Tibial artery (tissue), 4 donors: ENCODE measurements at regions of chr4 and their contacts with region 1.

Region 1: GRCh38 chr4:145061318-145061920 is 36.6 kb downstream of the ANAPC10 start:
- DNase-seq: no peak
- H3K4me3 ChIP-seq: no peak overlapping the region
- H3K27ac ChIP-seq: no peak overlapping the region
- H3K4me1 ChIP-seq: peaks cover 0 to 13% (median 0%) of the 10 kb centered on the region in 4 donors
- H3K27me3 ChIP-seq: no peaks in the 10 kb centered on the region
- CTCF ChIP-seq: peak; percentile 47 to 56

Region 2: DNA sequence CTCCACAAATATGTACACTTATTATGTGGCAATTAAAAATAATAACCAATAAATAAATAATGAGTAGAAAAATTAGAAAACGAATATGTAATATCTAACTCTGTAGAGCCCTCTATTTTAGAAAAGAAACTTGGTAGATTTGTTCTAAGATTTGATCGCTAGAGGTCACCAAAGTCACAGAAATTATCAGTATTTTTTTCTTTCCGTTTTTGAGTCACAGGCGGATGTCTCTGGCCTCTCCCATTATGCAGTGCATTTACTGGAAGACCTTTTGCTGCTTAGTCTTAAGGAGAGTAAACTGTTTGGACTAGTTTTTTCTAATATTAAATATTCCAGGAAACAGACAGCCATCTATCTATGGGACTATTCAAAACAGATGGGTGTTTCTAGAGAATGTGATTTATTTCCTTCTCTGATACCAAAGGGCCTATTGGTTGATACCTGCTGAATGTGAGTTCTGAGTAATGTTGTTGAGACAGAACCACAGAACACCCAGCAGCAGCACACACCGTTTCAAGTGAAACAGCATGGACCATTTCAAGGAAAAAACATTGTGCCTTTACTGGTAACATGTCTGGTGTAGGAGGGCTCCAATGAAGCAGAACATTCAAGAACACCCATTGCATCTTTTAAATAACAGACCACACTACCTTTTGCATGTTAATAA is 886.9 kb before region 1 on chr4:
- intact Hi-C with region 1: loop called (anchors 5 kb)
- DNase-seq: no peak
- H3K4me3 ChIP-seq: no peak overlapping the region
- H3K27ac ChIP-seq: no peak overlapping the region
- H3K4me1 ChIP-seq: peaks cover 0 to 4% (median 0%) of the 10 kb centered on the region in 4 donors
- H3K27me3 ChIP-seq: no peaks in the 10 kb centered on the region
- CTCF ChIP-seq: peak; percentile 40 to 56

Region 3: GRCh38 chr4:144499777-144500176 is 561.6 kb before region 1 on chr4:
- intact Hi-C with region 1: loop called (anchors 10 kb)
- DNase-seq: no peak
- H3K4me3 ChIP-seq: no peak overlapping the region
- H3K27ac ChIP-seq: no peak overlapping the region
- H3K4me1 ChIP-seq: peaks cover 0 to 14% (median 0%) of the 10 kb centered on the region in 4 donors
- H3K27me3 ChIP-seq: no peaks in the 10 kb centered on the region
- CTCF ChIP-seq: no peak

Region 4: DNA sequence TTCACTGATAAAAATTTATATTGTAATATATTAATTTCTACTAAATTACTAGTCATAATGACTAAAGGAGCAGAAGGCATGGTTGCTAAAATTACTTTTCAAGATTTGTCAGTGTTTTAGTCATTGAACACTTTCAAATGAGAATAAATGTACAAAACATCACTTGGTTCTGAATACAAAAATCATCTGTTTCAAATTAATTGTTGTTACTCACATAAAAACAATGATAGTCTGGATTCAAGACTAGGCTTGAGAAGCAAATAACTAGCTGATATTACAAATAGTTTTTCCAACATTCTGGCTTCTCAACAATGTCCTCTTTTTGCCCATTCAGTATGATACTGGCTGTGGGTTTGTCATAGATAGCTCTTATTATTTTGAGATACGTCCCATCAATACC is 75.9 kb before region 1 on chr4:
- intact Hi-C with region 1: no loop called
- DNase-seq: no peak
- H3K4me3 ChIP-seq: no peak overlapping the region
- H3K27ac ChIP-seq: no peak overlapping the region
- H3K4me1 ChIP-seq: no peaks in the 10 kb centered on the region
- H3K27me3 ChIP-seq: no peaks in the 10 kb centered on the region
- CTCF ChIP-seq: no peak

Region 5: GRCh38 chr4:145081756-145082155 is 20.3 kb after region 1 on chr4:
- intact Hi-C with region 1: loop called (anchors 1 kb)
- DNase-seq: no peak
- H3K4me3 ChIP-seq: no peak overlapping the region
- H3K27ac ChIP-seq: no peak overlapping the region
- H3K4me1 ChIP-seq: no peaks in the 10 kb centered on the region
- H3K27me3 ChIP-seq: no peaks in the 10 kb centered on the region
- CTCF ChIP-seq: no peak